Mammary epithelial cell (primary cell): ENCODE measurements at regions of chr6 and their contacts with region 1.

Region 1: DNA sequence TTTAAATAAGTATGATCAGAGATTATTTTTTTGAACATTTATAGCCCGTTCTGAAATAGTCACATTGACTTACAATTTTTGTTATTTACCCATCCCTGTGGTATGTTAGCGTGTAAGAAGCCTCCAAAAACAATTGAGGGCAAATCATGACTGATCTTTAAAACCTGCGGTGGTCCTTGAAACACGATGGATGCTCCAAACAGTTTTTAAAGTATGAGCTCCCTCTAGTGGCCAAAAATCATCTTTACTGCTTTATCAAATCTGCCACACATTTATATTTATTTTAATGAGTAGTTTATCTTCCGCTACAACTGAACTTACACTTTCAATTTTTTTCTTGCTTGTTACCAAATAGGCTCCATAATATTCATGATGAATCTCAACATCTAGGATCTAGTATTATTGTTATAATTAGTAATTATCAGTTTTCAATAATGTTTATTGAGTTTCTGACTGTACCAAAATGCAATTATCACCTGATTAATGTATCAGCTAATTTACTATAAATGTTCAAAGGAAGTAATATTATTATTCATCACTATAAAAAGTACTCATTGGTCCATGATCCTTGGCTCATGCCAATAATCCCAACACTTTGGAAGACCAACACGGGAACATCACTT is 52.2 kb downstream of the MARCKS start:
- DNase-seq: peak; percentile 11
- H3K4me3 ChIP-seq: no peak overlapping the region
- H3K27ac ChIP-seq: no peak overlapping the region
- H3K4me1 ChIP-seq: no peaks in the 10 kb centered on the region
- H3K27me3 ChIP-seq: no peaks in the 10 kb centered on the region
- CTCF ChIP-seq: peak; percentile 58 to 64

Region 2: GRCh38 chr6:112180095-112180820 is 1729.1 kb before region 1 on chr6:
- CTCF ChIA-PET with region 1: no interaction called
- dilution Hi-C with region 1: no loop called
- in situ Hi-C with region 1: no loop called
- intact Hi-C with region 1: loop called (anchors 5 kb)
- DNase-seq: peak; percentile 57
- H3K4me3 ChIP-seq: no peak overlapping the region
- H3K27ac ChIP-seq: no peak overlapping the region
- H3K4me1 ChIP-seq: no peaks in the 10 kb centered on the region
- H3K27me3 ChIP-seq: no peaks in the 10 kb centered on the region
- CTCF ChIP-seq: peak; percentile 48 to 76

Region 3: GRCh38 chr6:112337209-112337638 is 1572.1 kb before region 1 on chr6:
- CTCF ChIA-PET with region 1: no interaction called
- dilution Hi-C with region 1: no loop called
- in situ Hi-C with region 1: loop called in 1 of 2 experiments (anchors 25 kb)
- intact Hi-C with region 1: no loop called
- DNase-seq: peak; percentile 52
- H3K4me3 ChIP-seq: no peak overlapping the region
- H3K27ac ChIP-seq: no peak overlapping the region
- H3K4me1 ChIP-seq: peaks cover 3% of the 10 kb centered on the region
- H3K27me3 ChIP-seq: no peaks in the 10 kb centered on the region
- CTCF ChIP-seq: peak; percentile 76 to 84

Region 4: GRCh38 chr6:112691289-112691688 is 1218.1 kb before region 1 on chr6:
- CTCF ChIA-PET with region 1: interaction called, 13 read pairs
- dilution Hi-C with region 1: no loop called
- in situ Hi-C with region 1: no loop called
- intact Hi-C with region 1: no loop called
- DNase-seq: peak; percentile 88
- H3K4me3 ChIP-seq: no peak overlapping the region
- H3K27ac ChIP-seq: no peak overlapping the region
- H3K4me1 ChIP-seq: peaks cover 12% of the 10 kb centered on the region
- H3K27me3 ChIP-seq: no peaks in the 10 kb centered on the region
- CTCF ChIP-seq: no peak

Region 5: DNA sequence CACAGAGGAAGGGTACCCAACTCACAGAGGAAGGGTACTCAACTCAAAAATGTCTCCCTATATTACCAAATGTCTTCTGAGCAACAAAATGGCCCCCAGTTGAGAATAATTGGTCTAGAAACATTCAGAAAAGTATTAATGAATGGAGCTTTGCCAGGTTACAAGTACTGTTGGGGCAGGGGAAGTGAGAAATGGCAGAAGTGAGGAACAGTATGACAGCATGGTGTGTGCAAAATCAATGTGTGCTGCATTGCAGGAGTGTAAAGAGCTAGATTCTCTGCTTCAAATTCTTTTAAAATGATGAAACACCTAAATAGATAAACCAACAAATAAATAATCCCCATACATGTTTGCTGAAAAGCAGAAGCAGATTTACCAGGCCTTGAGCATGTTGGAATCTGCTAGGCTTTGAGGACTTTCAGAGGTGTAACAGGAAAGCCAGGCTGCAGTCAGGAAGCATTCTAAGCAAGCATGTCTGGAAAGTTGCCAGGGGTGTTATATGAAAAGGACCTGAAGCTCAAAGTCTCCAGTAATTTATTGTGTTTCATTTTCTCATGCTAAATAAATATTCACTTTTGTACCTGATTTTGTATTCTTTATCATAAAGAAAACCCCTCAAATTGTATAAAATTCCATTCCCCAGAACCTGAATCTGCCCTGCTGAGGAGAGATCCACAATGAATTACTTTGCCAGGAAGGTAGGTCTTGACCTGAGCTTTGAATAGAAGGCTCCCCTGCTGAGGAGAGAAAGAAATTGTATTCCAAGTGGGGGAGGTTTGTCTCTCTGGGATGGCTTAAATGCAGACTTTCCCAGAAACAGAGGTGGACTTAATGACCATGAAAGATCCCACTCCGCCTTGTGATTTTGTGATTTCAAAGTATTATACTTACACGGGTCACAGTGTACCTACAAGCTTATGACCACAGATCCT is 317.2 kb before region 1 on chr6:
- CTCF ChIA-PET with region 1: no interaction called
- dilution Hi-C with region 1: no loop called
- in situ Hi-C with region 1: no loop called
- intact Hi-C with region 1: loop called (anchors 1 kb)
- DNase-seq: no peak
- H3K4me3 ChIP-seq: no peak overlapping the region
- H3K27ac ChIP-seq: no peak overlapping the region
- H3K4me1 ChIP-seq: no peaks in the 10 kb centered on the region
- H3K27me3 ChIP-seq: no peaks in the 10 kb centered on the region
- CTCF ChIP-seq: no peak